A673 (cell line): ENCODE measurements at regions of chr3 and their contacts with region 1.

Region 1: GRCh38 chr3:121545574-121546455 is at the start of gene POLQ:
- DNase-seq: peak; percentile 97
- H3K4me3 ChIP-seq: peak within 1 kb of the TSS; percentile 92
- H3K27ac ChIP-seq: peak within 1 kb of the TSS; percentile 70
- H3K4me1 ChIP-seq: peaks cover 6% of the 10 kb centered on the region
- H3K27me3 ChIP-seq: no peaks in the 10 kb centered on the region
- CTCF ChIP-seq: no peak
- total RNA-seq, gene POLQ: 20.3 and 22.9 TPM in 2 replicates

Region 2: GRCh38 chr3:121995161-121996137 is 449.6 kb after region 1 on chr3:
- CTCF ChIA-PET with region 1: interaction called, 8 read pairs
- POLR2A ChIA-PET with region 1: no interaction called
- intact Hi-C with region 1: loop called (anchors 5 kb)
- DNase-seq: peak; percentile 66
- H3K4me3 ChIP-seq: no peak overlapping the region
- H3K27ac ChIP-seq: no peak overlapping the region
- H3K4me1 ChIP-seq: no peaks in the 10 kb centered on the region
- H3K27me3 ChIP-seq: no peaks in the 10 kb centered on the region
- CTCF ChIP-seq: peak; percentile 80

Region 3: GRCh38 chr3:122258757-122259371 is 713.0 kb after region 1 on chr3:
- CTCF ChIA-PET with region 1: no interaction called
- POLR2A ChIA-PET with region 1: no interaction called
- intact Hi-C with region 1: loop called (anchors 5 kb)
- DNase-seq: peak; percentile 68
- H3K4me3 ChIP-seq: no peak overlapping the region
- H3K27ac ChIP-seq: no peak overlapping the region
- H3K4me1 ChIP-seq: no peaks in the 10 kb centered on the region
- H3K27me3 ChIP-seq: peaks cover 39% of the 10 kb centered on the region
- CTCF ChIP-seq: peak; percentile 67

Region 4: GRCh38 chr3:122299872-122300460 is 754.2 kb after region 1 on chr3:
- CTCF ChIA-PET with region 1: no interaction called
- POLR2A ChIA-PET with region 1: no interaction called
- intact Hi-C with region 1: loop called (anchors 2 kb)
- DNase-seq: peak; percentile 45
- H3K4me3 ChIP-seq: no peak overlapping the region
- H3K27ac ChIP-seq: no peak overlapping the region
- H3K4me1 ChIP-seq: no peaks in the 10 kb centered on the region
- H3K27me3 ChIP-seq: no peaks in the 10 kb centered on the region
- CTCF ChIP-seq: peak; percentile 61

Region 5: DNA sequence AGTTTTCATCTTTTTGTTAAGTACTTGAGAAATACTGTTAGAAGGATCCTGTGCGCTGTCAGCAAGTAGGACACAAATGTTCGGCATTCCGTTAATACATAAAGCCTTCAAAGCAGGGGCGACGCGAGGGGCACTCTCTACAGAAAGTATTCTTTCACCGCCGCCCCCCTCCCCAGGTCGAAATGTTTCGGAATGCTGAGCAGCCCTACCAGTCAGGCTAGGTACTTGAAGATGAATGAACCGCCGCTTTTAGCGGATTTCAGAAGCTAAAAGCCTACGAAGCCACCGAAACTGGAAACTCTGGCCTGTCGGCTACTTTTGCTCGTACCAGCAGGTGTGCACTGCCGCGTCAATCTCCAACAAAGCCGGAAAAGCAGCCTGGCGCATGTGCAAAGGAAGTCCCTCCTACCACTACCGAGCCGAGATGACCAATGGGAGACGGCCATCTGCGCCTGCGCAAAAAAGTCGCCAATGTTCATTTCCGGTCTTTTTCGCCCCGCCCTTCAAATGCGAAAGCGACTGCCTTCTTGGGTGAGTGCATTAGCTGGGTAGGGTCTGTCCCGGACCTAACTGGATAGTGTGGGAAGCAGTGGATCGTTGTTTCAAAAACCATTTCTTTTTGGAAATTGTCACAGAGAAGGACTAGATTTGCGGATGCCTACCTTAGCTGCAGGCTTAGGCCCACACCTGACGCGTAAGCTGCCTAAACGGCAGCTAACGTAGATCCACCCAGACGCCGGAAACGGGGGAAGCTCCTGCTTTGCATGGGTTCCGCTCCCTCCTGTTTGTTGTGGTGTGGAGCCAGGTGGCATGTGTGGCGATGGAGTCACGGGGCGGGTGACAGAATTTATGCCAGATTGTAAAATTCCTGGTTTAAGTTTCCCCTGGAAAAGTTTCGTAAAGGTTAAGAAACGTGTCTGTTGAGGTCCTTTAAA is 870.2 kb after region 1 on chr3 and contains the start of gene WDR5B:
- CTCF ChIA-PET with region 1: no interaction called
- POLR2A ChIA-PET with region 1: no interaction called
- intact Hi-C with region 1: loop called (anchors 10 kb)
- DNase-seq: peak; percentile 98
- H3K4me3 ChIP-seq: peak within 1 kb of the TSS; percentile 83
- H3K27ac ChIP-seq: peak within 1 kb of the TSS; percentile 85
- H3K4me1 ChIP-seq: peaks cover 8% of the 10 kb centered on the region
- H3K27me3 ChIP-seq: no peaks in the 10 kb centered on the region
- CTCF ChIP-seq: no peak
- total RNA-seq, gene WDR5B: 4.6 and 5.4 TPM in 2 replicates

Region 6: GRCh38 chr3:122679085-122679881 is 1133.5 kb after region 1 on chr3:
- CTCF ChIA-PET with region 1: no interaction called
- POLR2A ChIA-PET with region 1: no interaction called
- intact Hi-C with region 1: loop called (anchors 2 kb)
- DNase-seq: peak; percentile 89
- H3K4me3 ChIP-seq: peak overlapping the region; percentile 71
- H3K27ac ChIP-seq: no peak overlapping the region
- H3K4me1 ChIP-seq: peaks cover 12% of the 10 kb centered on the region
- H3K27me3 ChIP-seq: no peaks in the 10 kb centered on the region
- CTCF ChIP-seq: peak; percentile 82